Activated CD4-positive, alpha-beta T cell treated with anti-CD3 and anti-CD28 coated beads, Interleukin-2, amount 10 ng/mL, durations not matched to agents 7 days and 5 days (primary cell): ENCODE measurements at regions of chr10 and their contacts with region 1.

Region 1: DNA sequence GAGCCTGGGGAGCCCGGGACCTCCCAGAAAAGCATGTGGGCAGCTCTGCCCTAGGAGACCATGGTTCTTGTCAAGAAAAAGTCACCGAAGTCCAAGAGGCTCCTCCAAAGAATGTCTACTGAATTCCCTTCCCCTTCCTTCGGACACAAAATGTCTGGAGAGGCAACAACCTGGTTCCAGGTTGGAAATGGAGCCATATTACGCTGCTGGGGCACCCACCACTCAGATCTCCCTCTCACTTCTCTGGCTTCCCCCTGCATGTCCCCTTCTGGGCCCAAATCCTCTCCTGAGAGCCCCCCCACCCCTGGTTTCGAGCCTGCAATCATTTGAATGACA is 52.6 kb downstream of the RGS10 start:
- DNase-seq: no peak
- H3K4me3 Mint-ChIP-seq: peak overlapping the region; percentile 77
- H3K27ac Mint-ChIP-seq: peak overlapping the region; percentile 92
- H3K4me1 Mint-ChIP-seq: peaks cover 54% of the 10 kb centered on the region
- H3K27me3 Mint-ChIP-seq: no peaks in the 10 kb centered on the region

Region 2: DNA sequence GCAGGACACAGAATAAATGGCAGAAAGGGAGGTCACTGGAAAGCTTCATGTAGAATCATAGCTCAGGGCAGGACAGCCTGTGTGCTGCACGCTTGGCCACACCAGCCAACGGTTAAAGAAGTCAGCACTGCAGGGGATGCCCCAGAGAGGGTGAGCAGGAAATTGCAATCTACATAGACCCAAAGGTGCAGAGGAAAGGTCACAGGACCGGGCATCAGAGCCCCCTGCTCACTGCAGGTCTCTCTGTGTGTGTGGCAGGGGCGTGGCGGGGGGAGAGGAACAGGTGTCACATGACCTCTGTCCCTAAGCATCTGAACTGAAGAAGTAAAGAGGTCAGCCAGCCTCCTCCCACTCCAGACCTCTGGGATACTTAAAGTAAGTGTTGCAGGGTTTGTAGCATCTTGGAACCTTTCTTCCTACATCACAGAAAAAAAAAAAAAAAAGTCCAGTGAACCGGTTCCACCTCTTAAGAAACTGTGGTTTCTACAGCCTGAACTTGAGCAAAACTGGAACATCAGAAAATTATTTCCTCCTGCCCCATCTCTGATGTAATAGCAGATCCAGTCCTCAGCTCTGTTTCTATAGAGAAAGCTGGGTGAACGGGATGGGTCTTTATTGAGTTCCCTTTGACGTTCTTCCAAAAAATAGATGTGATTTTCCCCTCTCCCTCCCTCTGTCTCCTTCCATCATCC is 11.7 kb before region 1 on chr10:
- CTCF ChIA-PET with region 1: interaction called, 22 read pairs
- POLR2A ChIA-PET with region 1: no interaction called
- DNase-seq: peak; percentile 33
- H3K4me3 Mint-ChIP-seq: peak overlapping the region; percentile 5
- H3K27ac Mint-ChIP-seq: peak overlapping the region; percentile 77
- H3K4me1 Mint-ChIP-seq: peaks cover 34% of the 10 kb centered on the region
- H3K27me3 Mint-ChIP-seq: peaks cover 12% of the 10 kb centered on the region

Region 3: GRCh38 chr10:119501690-119502089 is 11.7 kb after region 1 on chr10:
- CTCF ChIA-PET with region 1: interaction called, 12 read pairs
- POLR2A ChIA-PET with region 1: interaction called, 5 read pairs
- DNase-seq: no peak
- H3K4me3 Mint-ChIP-seq: peak overlapping the region; percentile 60
- H3K27ac Mint-ChIP-seq: peak overlapping the region; percentile 96
- H3K4me1 Mint-ChIP-seq: peaks cover 92% of the 10 kb centered on the region
- H3K27me3 Mint-ChIP-seq: no peaks in the 10 kb centered on the region

Region 4: GRCh38 chr10:119750391-119751230 is 260.7 kb after region 1 on chr10:
- CTCF ChIA-PET with region 1: no interaction called
- POLR2A ChIA-PET with region 1: no interaction called
- DNase-seq: peak; percentile 70
- H3K4me3 Mint-ChIP-seq: no peak overlapping the region
- H3K27ac Mint-ChIP-seq: no peak overlapping the region
- H3K4me1 Mint-ChIP-seq: peaks cover 9% of the 10 kb centered on the region
- H3K27me3 Mint-ChIP-seq: no peaks in the 10 kb centered on the region